ENCODE measurements at regions of chr22 and their contacts with region 1.

Region 1: GRCh38 chr22:22706253-22706915 is 62.0 kb downstream of the GGTLC2 start:
- DNase-seq: peak in 1 of 2 donors; percentile 21
- ATAC-seq: no peak
- H3K4me3 ChIP-seq: no peak overlapping the region
- H3K27ac ChIP-seq: no peak overlapping the region
- H3K4me1 ChIP-seq: no peaks in the 10 kb centered on the region
- H3K27me3 ChIP-seq: no peaks in the 10 kb centered on the region

Region 2: GRCh38 chr22:22764085-22764484 is 57.7 kb after region 1 on chr22:
- intact Hi-C with region 1: loop called in 1 of 2 experiments (anchors 2 kb)
- DNase-seq: no peak
- ATAC-seq: no peak
- H3K4me3 ChIP-seq: no peak overlapping the region
- H3K27ac ChIP-seq: no peak overlapping the region
- H3K4me1 ChIP-seq: no peaks in the 10 kb centered on the region
- H3K27me3 ChIP-seq: peaks cover 0 to 2% of the 10 kb centered on the region in 2 donors

Measured in aorta (tissue), 5 donors.